Dorsolateral prefrontal cortex (tissue), 120 donors: ENCODE measurements at regions of chrX and their contacts with region 1.

Region 1: DNA sequence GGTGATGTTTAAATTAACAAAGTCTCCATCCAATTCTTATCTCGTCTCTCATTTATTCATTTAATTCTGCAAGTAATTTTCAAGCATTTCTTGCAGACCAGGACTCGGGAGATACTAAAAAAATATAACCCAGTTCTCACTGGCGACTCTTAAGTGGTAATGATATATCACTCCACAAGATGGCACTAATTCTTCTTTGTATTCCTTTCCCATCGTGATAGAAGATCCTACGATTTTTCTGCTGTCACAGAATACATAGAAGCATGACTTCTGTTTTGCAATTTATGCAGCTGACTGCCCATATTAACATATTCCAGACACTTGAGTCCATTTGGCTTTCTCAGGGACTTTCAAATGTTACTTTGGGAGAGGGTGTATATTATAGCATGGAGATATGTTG is 64.0 kb upstream of the FGF13 start:
- DNase-seq: no peak
- H3K4me3 ChIP-seq: no peak overlapping the region
- H3K27ac ChIP-seq: no peak overlapping the region
- H3K27me3 ChIP-seq: peaks cover 0 to 59% (median 13%) of the 10 kb centered on the region in 45 donors
- CTCF ChIP-seq: peak in 55 of 56 donors; percentile 21 to 73 (median 49)

Region 2: DNA sequence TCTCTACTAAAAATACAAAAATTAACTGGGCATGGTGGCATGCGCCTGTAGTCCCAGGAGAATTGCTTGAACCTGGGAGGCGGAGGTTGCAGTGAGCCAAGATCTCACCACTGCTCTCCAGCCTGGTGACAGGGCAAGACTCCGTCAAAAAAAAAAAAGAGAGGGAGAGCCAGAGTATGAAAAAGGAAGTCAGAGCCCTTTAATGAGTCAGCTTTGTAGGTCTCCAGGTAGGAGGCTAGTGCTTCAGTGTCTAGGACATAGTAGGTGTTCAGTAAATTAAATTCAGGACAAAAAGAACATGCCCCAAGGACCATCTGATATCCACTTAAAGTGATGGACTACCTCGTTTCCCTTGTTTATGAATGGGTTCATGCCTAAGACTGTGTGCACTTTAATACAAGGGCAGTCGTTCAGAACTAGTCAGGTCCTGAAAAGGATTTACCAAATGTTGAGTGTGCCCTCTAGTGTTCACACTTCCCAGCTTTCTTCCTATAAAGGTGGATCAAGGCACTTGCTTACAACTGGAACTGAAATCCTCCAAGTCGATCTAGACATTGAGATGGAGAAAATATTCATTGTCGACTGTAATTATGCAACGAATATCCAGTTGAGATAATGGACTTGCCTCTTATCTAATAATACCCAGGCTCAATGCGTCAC is 784.0 kb after region 1 on chrX:
- intact Hi-C with region 1: loop called in 1 of 2 experiments (anchors 5 kb)
- DNase-seq: no peak
- H3K4me3 ChIP-seq: no peak overlapping the region
- H3K27ac ChIP-seq: no peak overlapping the region
- H3K27me3 ChIP-seq: peaks cover 0 to 95% (median 36%) of the 10 kb centered on the region in 45 donors
- CTCF ChIP-seq: peak in 52 of 56 donors; percentile 9 to 68 (median 38)

Region 3: DNA sequence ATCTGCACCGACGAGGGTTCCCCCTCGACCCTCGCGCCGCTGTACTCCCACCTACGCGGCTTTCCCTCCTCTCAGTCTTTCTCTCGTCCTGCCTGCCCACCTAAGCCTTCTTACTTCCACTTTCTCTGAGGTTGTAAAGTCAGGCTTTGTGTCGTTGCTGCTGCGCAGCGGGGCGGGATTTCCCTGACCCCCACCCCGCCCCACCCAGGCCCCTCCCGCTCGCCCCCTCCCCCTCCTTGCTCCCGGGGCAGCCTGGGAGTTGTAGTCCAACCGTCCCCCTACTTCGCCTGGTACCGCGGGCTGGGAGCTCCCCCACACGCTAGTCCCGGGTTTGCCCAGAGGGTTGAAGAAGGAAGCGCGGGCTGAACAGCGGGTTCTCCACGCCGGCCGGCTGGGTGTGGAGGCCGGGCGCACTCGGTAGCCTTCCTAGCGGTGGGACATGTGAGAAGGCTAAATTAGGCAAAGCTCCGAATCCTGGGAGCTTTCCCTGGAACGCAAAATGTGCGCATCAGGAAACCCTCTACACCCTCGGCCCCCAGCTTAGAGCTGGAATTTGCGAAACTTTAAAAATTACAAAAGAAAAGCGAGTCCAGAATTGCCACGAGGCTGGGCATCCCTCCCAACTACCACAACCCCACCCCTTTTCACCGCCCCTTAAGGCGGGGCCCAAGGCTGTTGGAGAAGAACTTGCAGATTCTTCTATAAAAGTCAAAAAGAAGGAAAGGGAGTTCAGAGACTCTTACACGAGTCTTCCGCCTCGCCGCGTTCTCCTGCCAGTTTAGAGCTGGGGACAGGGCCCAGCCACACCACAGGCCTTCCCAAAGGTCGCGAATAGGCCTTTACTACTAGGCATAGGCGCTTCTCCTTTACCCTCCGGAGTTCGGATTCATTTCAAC is 1157.6 kb after region 1 on chrX and contains the start of gene ATP11C:
- intact Hi-C with region 1: loop called in 1 of 2 experiments (anchors 5 kb)
- DNase-seq: peak; percentile 60 to 80 (median 68)
- H3K4me3 ChIP-seq: peak within 1 kb of the TSS; percentile 33 to 78 (median 67)
- H3K27ac ChIP-seq: peak within 1 kb of the TSS in 56 of 59 donors; percentile 31 to 94 (median 86)
- H3K27me3 ChIP-seq: peaks cover 0 to 91% (median 38%) of the 10 kb centered on the region in 45 donors
- CTCF ChIP-seq: peak in 41 of 56 donors; percentile 6 to 61 (median 29)
- total RNA-seq, gene ATP11C: 3.2 to 13.8 (median 7.1) TPM